ENCODE measurements at regions of chr5 and their contacts with region 1.

Region 1: GRCh38 chr5:142507531-142508372 is 178.1 kb downstream of the FGF1 start:
- DNase-seq: no peak
- H3K4me3 Mint-ChIP-seq: no peak overlapping the region
- H3K27ac Mint-ChIP-seq: peak overlapping the region; percentile 57
- H3K4me1 Mint-ChIP-seq: peaks cover 41% of the 10 kb centered on the region
- H3K27me3 Mint-ChIP-seq: no peaks in the 10 kb centered on the region

Region 2: GRCh38 chr5:142006363-142007236 is 501.2 kb before region 1 on chr5:
- intact Hi-C with region 1: loop called (anchors 1 kb)
- DNase-seq: peak; percentile 58
- H3K4me3 Mint-ChIP-seq: peak overlapping the region; percentile 80
- H3K27ac Mint-ChIP-seq: peak overlapping the region; percentile 94
- H3K4me1 Mint-ChIP-seq: peaks cover 72% of the 10 kb centered on the region
- H3K27me3 Mint-ChIP-seq: no peaks in the 10 kb centered on the region

Region 3: DNA sequence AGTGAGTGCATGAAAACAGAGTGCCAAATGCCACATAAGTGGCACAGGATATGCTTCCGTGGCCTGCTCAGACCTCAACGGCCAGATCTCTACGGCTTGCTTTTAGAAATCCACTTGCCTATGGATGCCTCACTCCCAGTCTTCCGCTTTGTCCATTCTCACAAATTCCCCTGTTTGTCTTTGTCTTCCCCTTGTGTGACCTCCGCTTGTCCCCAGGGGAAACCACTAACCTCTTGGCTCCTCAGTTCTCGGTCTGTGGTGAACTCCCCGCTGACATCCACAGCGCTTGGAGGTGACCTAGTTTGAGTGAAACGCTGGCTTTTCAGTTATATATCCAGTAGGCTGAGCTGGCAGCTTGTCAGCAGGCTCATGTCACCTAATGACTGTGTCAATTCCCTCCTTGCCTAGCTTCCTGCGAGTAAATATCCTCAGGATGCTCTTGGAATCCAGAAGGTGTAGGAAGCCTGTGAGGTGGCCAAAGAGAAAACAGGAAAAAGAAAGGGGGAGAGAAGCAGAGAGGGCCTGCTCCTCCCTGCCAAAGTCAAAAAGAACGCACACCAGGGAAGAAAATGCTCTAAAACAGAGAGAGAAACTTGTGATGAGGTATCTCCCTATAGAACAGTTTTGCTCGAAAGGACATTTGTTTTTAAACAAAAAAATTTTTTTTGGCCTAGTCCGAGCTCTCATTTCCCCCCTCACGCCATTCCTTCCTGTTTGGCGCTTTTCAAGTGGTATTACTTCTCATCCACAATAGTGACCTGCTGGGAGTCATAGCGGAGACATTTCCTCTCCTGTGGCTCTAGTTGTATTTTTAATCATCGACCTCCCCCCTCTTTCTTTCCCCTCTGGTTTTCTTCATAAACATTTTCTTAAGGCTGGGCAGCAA is 81.4 kb before region 1 on chr5:
- intact Hi-C with region 1: no loop called
- DNase-seq: no peak
- H3K4me3 Mint-ChIP-seq: no peak overlapping the region
- H3K27ac Mint-ChIP-seq: peak overlapping the region; percentile 19
- H3K4me1 Mint-ChIP-seq: peaks cover 40% of the 10 kb centered on the region
- H3K27me3 Mint-ChIP-seq: peaks cover 2% of the 10 kb centered on the region

Region 4: GRCh38 chr5:142472300-142472951 is 35.3 kb before region 1 on chr5:
- intact Hi-C with region 1: loop called (anchors 1 kb)
- DNase-seq: peak; percentile 17
- H3K4me3 Mint-ChIP-seq: no peak overlapping the region
- H3K27ac Mint-ChIP-seq: peak overlapping the region; percentile 81
- H3K4me1 Mint-ChIP-seq: peaks cover 15% of the 10 kb centered on the region
- H3K27me3 Mint-ChIP-seq: no peaks in the 10 kb centered on the region

Region 5: GRCh38 chr5:142540922-142541422 is 33.2 kb after region 1 on chr5:
- intact Hi-C with region 1: no loop called
- DNase-seq: no peak
- H3K4me3 Mint-ChIP-seq: no peak overlapping the region
- H3K27ac Mint-ChIP-seq: no peak overlapping the region
- H3K4me1 Mint-ChIP-seq: no peaks in the 10 kb centered on the region
- H3K27me3 Mint-ChIP-seq: peaks cover 17% of the 10 kb centered on the region